Activated CD8-positive, alpha-beta T cell treated with anti-CD3 and anti-CD28 coated beads, Interleukin-2, amount 10 ng/mL, durations not matched to agents 7 days and 5 days (primary cell): ENCODE measurements at regions of chr3 and their contacts with region 1.

Region 1: GRCh38 chr3:48898383-48899234 is at the start of gene SLC25A20:
- DNase-seq: peak; percentile 95
- ATAC-seq: peak; percentile 94
- H3K4me3 Mint-ChIP-seq: peak within 1 kb of the TSS; percentile 90
- H3K27ac Mint-ChIP-seq: peak within 1 kb of the TSS; percentile 99
- H3K4me1 Mint-ChIP-seq: peaks cover 42% of the 10 kb centered on the region
- H3K27me3 Mint-ChIP-seq: no peaks in the 10 kb centered on the region
- total RNA-seq, gene SLC25A20: 29.9 to 33.1 TPM

Region 2: GRCh38 chr3:48685602-48686511 is 212.8 kb before region 1 on chr3 and contains the start of gene NCKIPSD:
- CTCF ChIA-PET with region 1: interaction called, 10 read pairs
- POLR2A ChIA-PET with region 1: no interaction called
- DNase-seq: peak; percentile 92
- ATAC-seq: peak; percentile 88
- H3K4me3 Mint-ChIP-seq: peak within 1 kb of the TSS; percentile 83
- H3K27ac Mint-ChIP-seq: peak within 1 kb of the TSS; percentile 88
- H3K4me1 Mint-ChIP-seq: peaks cover 34% of the 10 kb centered on the region
- H3K27me3 Mint-ChIP-seq: no peaks in the 10 kb centered on the region
- total RNA-seq, gene NCKIPSD: 56.5 to 57.1 TPM

Region 3: GRCh38 chr3:48765376-48765775 is 133.2 kb before region 1 on chr3:
- CTCF ChIA-PET with region 1: interaction called, 10 read pairs
- POLR2A ChIA-PET with region 1: no interaction called
- DNase-seq: no peak
- ATAC-seq: no peak
- H3K4me3 Mint-ChIP-seq: no peak overlapping the region
- H3K27ac Mint-ChIP-seq: no peak overlapping the region
- H3K4me1 Mint-ChIP-seq: no peaks in the 10 kb centered on the region
- H3K27me3 Mint-ChIP-seq: no peaks in the 10 kb centered on the region

Region 4: DNA sequence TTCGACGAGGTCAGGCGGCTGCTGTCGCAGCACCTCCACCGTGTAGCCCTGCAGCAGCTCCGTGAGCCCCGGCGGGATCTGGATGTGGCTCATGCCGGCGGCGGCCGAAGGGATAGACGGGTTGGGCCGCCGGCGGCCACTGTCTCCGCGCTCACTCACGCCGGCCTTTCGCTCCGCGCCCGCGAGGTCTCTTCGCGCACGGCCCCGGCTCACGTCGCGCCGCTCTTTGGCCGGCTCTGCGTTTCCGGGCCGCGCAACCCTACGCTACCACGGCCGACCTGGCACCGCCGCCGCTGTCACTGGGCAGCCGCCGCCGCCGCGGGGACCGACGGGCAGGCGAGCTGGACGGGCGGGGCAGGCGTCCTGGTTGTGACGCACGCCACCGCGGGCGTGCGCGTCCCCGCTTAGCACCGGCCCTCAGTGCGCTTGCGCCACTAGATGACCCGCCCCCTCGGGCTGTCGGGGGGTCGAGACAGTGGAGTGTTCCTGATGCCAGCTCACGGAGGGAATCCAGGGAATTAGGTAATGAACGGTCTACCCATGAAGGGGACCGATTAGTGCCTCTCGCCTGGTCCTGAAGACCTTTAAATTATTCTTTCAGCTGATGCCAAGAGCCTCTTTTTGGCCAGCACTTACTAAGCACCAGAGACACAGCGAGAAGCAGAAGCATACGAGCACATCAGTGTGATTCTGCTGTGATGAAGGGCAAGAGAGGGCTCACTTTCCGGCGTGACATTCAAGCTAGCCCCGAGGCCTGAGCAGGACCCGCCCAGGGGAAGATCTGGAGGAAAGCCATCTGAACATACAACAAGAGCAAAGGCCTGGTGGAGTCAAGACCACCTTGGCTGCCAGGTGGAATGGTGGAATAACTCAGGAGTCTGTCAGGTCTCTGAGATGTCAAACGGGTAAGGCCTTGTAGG is 50.8 kb before region 1 on chr3 and contains the start of gene PRKAR2A:
- CTCF ChIA-PET with region 1: interaction called, 5 read pairs
- POLR2A ChIA-PET with region 1: interaction called, 14 read pairs
- DNase-seq: peak; percentile 84
- ATAC-seq: peak; percentile 82
- H3K4me3 Mint-ChIP-seq: peak within 1 kb of the TSS; percentile 85
- H3K27ac Mint-ChIP-seq: peak within 1 kb of the TSS; percentile 87
- H3K4me1 Mint-ChIP-seq: peaks cover 28% of the 10 kb centered on the region
- H3K27me3 Mint-ChIP-seq: no peaks in the 10 kb centered on the region
- total RNA-seq, gene PRKAR2A: 35.9 to 40.2 TPM

Region 5: DNA sequence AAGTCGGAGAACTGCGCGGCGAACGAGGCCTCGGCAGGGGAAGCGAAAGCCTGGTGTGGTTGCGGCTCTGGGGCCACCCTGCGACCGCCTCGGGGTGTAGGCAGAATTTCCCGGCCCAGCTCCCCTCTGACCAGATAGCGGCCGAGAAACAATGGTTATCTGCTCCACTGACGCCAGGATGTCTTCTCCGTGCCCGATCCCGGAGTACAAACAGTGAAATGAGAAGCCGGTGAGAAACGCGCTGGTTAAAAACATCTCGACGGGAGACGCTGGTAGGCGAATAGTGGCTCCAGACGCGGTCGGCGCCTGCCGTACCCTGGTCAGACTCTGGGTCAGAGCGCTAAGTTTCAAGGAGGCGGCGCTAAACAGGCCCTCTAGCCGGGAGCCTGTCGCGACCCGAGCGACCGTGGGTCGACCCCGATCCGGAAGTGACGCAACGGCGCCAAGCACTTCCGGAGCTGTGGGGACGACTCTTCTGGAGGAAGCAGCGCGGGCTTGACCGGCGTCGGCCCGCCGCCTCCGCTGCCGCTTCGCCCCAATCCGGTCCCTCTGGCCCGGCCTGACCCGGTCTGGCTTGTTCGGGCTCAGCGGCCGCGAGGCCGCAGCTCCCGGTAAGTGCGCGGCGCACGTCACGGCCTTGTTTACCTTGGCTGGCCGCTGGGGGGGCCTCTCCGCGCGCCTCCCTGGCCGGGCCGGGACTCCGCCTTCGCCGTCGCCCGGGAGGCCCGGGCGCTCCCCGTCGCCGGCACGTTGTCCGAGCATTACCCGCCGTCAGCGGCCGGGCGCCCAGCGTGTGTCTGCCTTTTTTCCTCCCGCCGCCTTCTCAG is 20.0 kb after region 1 on chr3 and contains the start of gene ARIH2:
- CTCF ChIA-PET with region 1: interaction called, 22 read pairs
- POLR2A ChIA-PET with region 1: interaction called, 74 read pairs
- DNase-seq: peak; percentile 93
- ATAC-seq: peak; percentile 82
- H3K4me3 Mint-ChIP-seq: peak within 1 kb of the TSS; percentile 95
- H3K27ac Mint-ChIP-seq: peak within 1 kb of the TSS; percentile 99
- H3K4me1 Mint-ChIP-seq: peaks cover 28% of the 10 kb centered on the region
- H3K27me3 Mint-ChIP-seq: no peaks in the 10 kb centered on the region
- total RNA-seq, gene ARIH2: 102 to 112 TPM

Region 6: DNA sequence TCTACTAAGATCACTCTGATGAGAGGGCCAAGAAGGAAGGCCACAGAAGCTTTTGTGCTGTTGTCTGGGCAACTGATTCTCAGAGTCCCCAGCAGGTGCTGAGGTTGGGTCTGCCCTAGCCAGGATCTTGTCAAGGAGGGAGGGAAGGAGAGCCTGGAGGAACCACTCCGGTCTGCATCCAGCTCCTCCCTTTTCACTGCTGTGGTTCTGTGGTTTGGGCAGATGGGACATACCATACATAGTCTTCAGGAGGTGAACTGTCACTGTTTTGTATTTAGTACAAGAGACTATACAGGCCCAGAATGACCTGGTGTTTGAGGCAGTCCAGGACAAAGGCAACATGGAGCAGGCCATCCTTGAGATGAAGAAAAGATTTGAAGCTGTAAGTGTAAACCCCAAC is 356.5 kb after region 1 on chr3:
- CTCF ChIA-PET with region 1: no interaction called
- POLR2A ChIA-PET with region 1: no interaction called
- DNase-seq: no peak
- ATAC-seq: no peak
- H3K4me3 Mint-ChIP-seq: no peak overlapping the region
- H3K27ac Mint-ChIP-seq: no peak overlapping the region
- H3K4me1 Mint-ChIP-seq: peaks cover 5% of the 10 kb centered on the region
- H3K27me3 Mint-ChIP-seq: peaks cover 4% of the 10 kb centered on the region